ENCODE measurements at regions of chr7 and their contacts with region 1.

Region 1: DNA sequence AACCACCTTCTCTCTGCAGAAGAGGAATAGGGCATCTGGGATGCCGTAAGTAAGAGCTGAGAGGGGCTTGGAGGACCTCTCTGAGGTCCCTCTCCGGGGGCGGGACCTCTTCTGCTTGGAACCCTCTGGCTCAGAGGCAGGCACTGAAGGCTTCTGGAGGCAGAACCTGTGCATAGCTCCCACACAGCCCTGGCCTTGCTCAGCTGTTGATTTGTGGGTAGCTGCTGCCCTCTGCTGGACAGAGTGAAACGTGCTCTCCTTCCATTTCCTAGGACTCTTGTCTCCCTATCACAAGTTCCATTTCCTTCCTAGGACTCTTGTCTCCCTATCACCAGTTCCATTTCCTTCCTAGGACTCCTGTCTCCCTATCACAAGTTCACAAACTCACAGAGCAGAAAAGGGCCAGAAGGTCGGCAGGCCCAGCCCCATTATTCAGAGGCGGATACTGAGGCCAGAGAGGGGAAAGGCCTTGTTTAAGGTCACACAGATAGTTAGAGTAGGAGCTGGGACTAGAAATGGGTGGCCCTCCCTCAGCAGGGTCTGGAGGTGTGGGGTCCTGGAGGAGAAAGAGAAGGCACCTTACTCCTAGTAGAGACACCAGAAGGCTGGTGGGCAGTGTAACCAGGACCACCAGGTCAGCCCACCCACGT is 30.3 kb upstream of the GARS1 start:
- DNase-seq: peak; percentile 85
- H3K4me3 Mint-ChIP-seq: no peak overlapping the region
- H3K27ac Mint-ChIP-seq: no peak overlapping the region
- H3K4me1 Mint-ChIP-seq: no peaks in the 10 kb centered on the region
- H3K27me3 Mint-ChIP-seq: no peaks in the 10 kb centered on the region

Region 2: GRCh38 chr7:30074422-30075030 is 489.8 kb before region 1 on chr7:
- CTCF ChIA-PET with region 1: no interaction called
- intact Hi-C with region 1: loop called (anchors 5 kb)
- DNase-seq: no peak
- H3K4me3 Mint-ChIP-seq: no peak overlapping the region
- H3K27ac Mint-ChIP-seq: no peak overlapping the region
- H3K4me1 Mint-ChIP-seq: no peaks in the 10 kb centered on the region
- H3K27me3 Mint-ChIP-seq: no peaks in the 10 kb centered on the region

Region 3: GRCh38 chr7:30276203-30276900 is 288.0 kb before region 1 on chr7:
- CTCF ChIA-PET with region 1: interaction called, 45 read pairs
- intact Hi-C with region 1: loop called (anchors 1 kb)
- DNase-seq: peak; percentile 75
- H3K4me3 Mint-ChIP-seq: no peak overlapping the region
- H3K27ac Mint-ChIP-seq: no peak overlapping the region
- H3K4me1 Mint-ChIP-seq: peaks cover 5% of the 10 kb centered on the region
- H3K27me3 Mint-ChIP-seq: no peaks in the 10 kb centered on the region

Region 4: DNA sequence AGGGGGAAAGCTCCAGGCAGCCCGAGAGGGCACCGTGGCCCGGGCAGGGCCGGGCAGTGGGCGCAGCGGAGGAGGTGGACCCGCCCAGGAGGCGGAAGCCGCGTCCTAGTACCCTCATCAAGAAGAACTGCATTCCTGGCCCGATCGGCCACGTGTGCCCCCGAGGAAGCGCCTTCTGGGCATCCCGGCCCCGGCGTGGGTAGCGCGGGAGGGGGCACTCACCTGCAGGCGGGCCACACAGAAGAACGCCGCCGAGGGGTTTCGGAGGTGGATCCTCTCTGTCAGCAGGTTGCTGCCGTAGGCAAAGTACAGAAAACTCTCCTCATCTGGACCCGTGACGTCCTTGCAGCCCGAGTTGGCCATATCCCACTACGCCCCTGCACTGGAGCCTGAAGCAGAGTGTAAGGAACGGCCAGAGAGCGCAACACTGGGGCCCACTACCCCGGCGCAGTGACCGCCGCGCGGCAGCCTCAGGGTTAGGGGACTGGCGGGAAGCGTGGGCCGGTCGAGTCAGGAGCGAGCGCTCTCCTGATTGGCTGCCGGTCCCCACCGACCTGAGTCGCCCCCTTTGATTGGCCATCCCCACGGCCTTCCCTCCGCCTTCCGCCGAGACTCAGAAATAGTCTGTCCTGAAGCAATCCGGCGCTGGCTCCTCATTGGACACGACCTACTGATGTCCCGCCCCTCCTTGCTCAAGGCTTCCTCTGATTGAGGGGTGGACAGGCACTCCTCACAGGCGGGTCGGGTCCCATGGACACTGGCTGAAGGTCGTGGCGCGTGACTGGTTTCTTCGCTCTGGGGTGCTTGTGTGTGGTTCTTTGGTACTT is 59.8 kb before region 1 on chr7 and contains the start of gene GGCT:
- CTCF ChIA-PET with region 1: interaction called, 15 read pairs
- intact Hi-C with region 1: no loop called
- DNase-seq: peak; percentile 99
- H3K4me3 Mint-ChIP-seq: peak within 1 kb of the TSS; percentile 82
- H3K27ac Mint-ChIP-seq: peak within 1 kb of the TSS; percentile 85
- H3K4me1 Mint-ChIP-seq: peaks cover 38% of the 10 kb centered on the region
- H3K27me3 Mint-ChIP-seq: no peaks in the 10 kb centered on the region
- total RNA-seq, gene GGCT: 83.0 to 83.8 TPM

Region 5: GRCh38 chr7:30548762-30549344 is 15.5 kb before region 1 on chr7:
- CTCF ChIA-PET with region 1: interaction called, 75 read pairs
- intact Hi-C with region 1: loop called (anchors 1 kb)
- DNase-seq: peak; percentile 52
- H3K4me3 Mint-ChIP-seq: no peak overlapping the region
- H3K27ac Mint-ChIP-seq: no peak overlapping the region
- H3K4me1 Mint-ChIP-seq: no peaks in the 10 kb centered on the region
- H3K27me3 Mint-ChIP-seq: no peaks in the 10 kb centered on the region